Posterior vena cava (tissue), 2 donors: ENCODE measurements at regions of chr9 and their contacts with region 1.

Region 1: GRCh38 chr9:38707885-38708637 is 11.9 kb downstream of the FAM240B start:
- DNase-seq: no peak

Region 2: GRCh38 chr9:38641985-38642864 is 65.8 kb before region 1 on chr9:
- intact Hi-C with region 1: loop called in 1 of 2 experiments (anchors 10 kb)
- DNase-seq: no peak

Region 3: GRCh38 chr9:38732885-38733284 is 24.8 kb after region 1 on chr9:
- intact Hi-C with region 1: no loop called
- DNase-seq: no peak